Activated naive CD4-positive, alpha-beta T cell treated with anti-CD3 and anti-CD28 coated beads, Interleukin-2, amount 10 ng/mL, durations not matched to agents 7 days and 5 days (primary cell): ENCODE measurements at regions of chr6 and their contacts with region 1.

Region 1: GRCh38 chr6:110179401-110180227 is at the start of gene WASF1:
- DNase-seq: peak; percentile 92
- H3K4me3 Mint-ChIP-seq: peak within 1 kb of the TSS; percentile 68
- H3K27ac Mint-ChIP-seq: peak within 1 kb of the TSS; percentile 79
- H3K4me1 Mint-ChIP-seq: peaks cover 6% of the 10 kb centered on the region
- H3K27me3 Mint-ChIP-seq: peaks cover 10% of the 10 kb centered on the region

Region 2: GRCh38 chr6:110201151-110201884 is 21.7 kb after region 1 on chr6:
- CTCF ChIA-PET with region 1: no interaction called
- DNase-seq: no peak
- H3K4me3 Mint-ChIP-seq: no peak overlapping the region
- H3K27ac Mint-ChIP-seq: no peak overlapping the region
- H3K4me1 Mint-ChIP-seq: no peaks in the 10 kb centered on the region
- H3K27me3 Mint-ChIP-seq: no peaks in the 10 kb centered on the region

Region 3: DNA sequence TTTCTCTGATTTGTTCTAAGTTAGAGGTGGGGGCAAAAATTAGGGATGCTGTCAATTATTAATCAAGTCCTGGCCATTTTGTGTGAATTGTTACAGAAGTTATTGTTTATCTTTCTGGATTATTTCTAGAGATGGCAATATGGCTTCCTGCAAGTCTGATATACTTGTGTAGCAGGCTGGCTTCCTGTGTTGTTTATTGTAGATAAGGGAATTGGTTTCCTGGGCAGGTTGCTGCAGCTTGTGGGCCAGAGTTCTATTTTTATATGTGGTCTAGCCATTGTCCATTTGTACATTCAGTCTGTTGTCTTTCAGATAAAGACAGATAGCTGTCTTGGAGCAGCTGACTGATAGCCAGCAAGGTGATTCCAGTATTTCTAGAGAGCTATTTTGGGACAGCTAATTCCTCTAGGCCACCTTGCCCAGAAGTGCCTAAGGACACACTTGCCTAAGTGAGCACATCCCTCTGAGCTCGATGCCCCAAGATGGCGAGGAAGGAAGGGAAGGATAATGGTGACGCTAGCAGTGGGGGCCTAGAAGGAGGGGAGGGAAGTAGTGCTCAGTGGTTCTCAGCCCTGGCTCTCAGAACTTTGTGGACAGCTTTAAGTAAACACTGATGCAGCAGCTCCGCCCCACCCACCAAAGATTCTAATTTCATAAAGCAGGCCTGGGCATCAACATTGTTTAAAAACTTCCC is 210.2 kb after region 1 on chr6:
- CTCF ChIA-PET with region 1: interaction called, 35 read pairs
- DNase-seq: no peak
- H3K4me3 Mint-ChIP-seq: no peak overlapping the region
- H3K27ac Mint-ChIP-seq: no peak overlapping the region
- H3K4me1 Mint-ChIP-seq: peaks cover 15% of the 10 kb centered on the region
- H3K27me3 Mint-ChIP-seq: no peaks in the 10 kb centered on the region